Ascending aorta (tissue), 2 donors: ENCODE measurements at regions of chr6 and their contacts with region 1.

Region 1: GRCh38 chr6:3913077-3913957 is 64.1 kb downstream of the FAM50B start:
- DNase-seq: peak in 1 of 2 donors; percentile 91
- H3K4me3 ChIP-seq: no peak overlapping the region
- H3K27ac ChIP-seq: peak overlapping the region; percentile 88 to 92
- H3K4me1 ChIP-seq: peaks cover 24 to 44% of the 10 kb centered on the region in 2 donors
- H3K27me3 ChIP-seq: no peaks in the 10 kb centered on the region
- CTCF ChIP-seq: no peak

Region 2: GRCh38 chr6:3751730-3752542 is 161.4 kb before region 1 on chr6:
- intact Hi-C with region 1: loop called (anchors 2 kb)
- DNase-seq: peak; percentile 59 to 96
- H3K4me3 ChIP-seq: peak overlapping the region; percentile 81 to 82
- H3K27ac ChIP-seq: peak overlapping the region; percentile 100
- H3K4me1 ChIP-seq: peaks cover 0 to 3% of the 10 kb centered on the region in 2 donors
- H3K27me3 ChIP-seq: no peaks in the 10 kb centered on the region
- CTCF ChIP-seq: peak; percentile 33 to 50 (median 47)

Region 3: GRCh38 chr6:3808759-3809514 is 104.4 kb before region 1 on chr6:
- intact Hi-C with region 1: loop called (anchors 5 kb)
- DNase-seq: peak; percentile 54 to 93
- H3K4me3 ChIP-seq: peak overlapping the region in 1 of 2 donors; percentile 3
- H3K27ac ChIP-seq: peak overlapping the region; percentile 86 to 94
- H3K4me1 ChIP-seq: peaks cover 13 to 47% of the 10 kb centered on the region in 2 donors
- H3K27me3 ChIP-seq: no peaks in the 10 kb centered on the region
- CTCF ChIP-seq: no peak

Region 4: DNA sequence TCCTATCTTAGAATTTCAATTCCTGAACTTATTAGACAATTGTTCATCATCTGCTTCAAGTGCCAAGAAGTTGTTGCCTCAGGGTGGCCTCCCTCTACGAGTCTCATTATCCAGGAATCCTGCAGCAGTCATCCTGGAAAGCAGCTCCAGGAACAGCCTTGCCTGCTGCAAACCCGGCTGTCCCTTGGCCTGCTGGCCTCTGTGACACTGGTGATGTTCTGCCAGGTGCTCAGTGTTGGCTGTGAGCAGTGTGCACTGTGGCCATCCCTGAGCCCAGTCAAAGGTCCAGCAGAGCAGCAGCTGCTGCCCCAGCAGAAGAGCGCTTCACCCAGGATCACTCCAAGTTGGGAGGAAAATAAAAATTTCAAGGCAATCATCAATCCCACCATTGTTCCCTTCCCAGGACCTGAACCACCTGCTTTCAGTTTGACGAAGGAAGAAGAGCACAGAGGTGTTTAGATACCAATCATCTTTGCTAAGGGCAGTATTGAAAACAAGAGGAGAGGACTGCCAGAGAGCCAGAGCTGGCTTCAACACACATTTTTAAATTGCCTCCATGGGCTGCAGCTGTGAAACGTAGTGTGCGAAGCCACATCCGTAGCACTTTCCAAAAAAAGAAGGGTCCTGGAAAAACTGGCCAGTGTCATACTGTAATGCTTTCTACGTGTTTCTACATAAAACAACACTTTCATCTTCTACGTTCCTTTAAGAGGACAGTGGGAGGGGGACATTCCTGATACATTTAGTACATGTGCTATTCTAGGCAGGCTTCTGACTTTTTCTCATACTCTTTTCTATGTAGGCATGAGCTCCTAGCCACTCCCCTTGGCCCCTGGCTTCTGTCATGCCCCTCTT is 71.4 kb before region 1 on chr6:
- intact Hi-C with region 1: loop called (anchors 2 kb)
- DNase-seq: peak in 1 of 2 donors; percentile 79
- H3K4me3 ChIP-seq: no peak overlapping the region
- H3K27ac ChIP-seq: peak overlapping the region; percentile 85 to 91
- H3K4me1 ChIP-seq: peaks cover 7 to 40% of the 10 kb centered on the region in 2 donors
- H3K27me3 ChIP-seq: no peaks in the 10 kb centered on the region
- CTCF ChIP-seq: no peak

Region 5: DNA sequence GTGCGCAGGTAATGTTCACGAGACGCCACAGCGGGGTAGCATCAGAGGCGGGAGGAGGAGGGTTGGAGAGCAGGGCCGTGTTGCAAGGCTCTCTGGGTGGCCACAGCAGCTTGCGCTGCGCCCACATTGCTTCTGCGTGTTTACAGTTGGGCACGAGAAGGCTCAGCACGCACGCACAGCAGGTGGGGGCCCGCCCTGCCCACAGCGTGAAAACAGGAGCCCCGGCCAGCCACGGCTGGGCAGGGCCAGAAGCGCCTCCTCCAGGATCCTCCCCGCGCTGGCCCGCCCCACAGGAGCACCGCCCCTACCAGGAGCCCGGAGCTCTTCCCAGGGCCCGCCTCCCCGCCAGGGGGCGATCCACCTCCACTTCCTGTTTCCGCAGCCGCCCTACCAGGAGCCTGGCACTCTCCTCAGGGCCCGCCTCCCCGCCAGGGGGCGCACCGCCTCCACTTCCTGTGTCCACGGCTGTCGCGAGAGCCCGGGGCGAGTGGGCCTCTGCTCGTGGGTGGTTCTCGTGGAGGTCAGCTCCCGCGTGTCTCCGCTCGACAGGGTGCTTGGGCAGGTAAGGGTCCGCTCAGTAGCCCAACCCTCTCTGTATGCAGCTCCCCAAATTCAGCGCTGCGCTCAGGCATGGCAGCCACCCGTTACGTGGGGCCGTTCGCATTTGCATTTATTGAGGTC is 64.3 kb before region 1 on chr6 and contains the start of gene FAM50B:
- intact Hi-C with region 1: loop called (anchors 1 kb)
- DNase-seq: peak; percentile 79 to 96
- H3K4me3 ChIP-seq: peak within 1 kb of the TSS; percentile 46 to 64
- H3K27ac ChIP-seq: peak within 1 kb of the TSS; percentile 70 to 74
- H3K4me1 ChIP-seq: peaks cover 0 to 36% of the 10 kb centered on the region in 2 donors
- H3K27me3 ChIP-seq: no peaks in the 10 kb centered on the region
- CTCF ChIP-seq: peak; percentile 91 to 99 (median 98)
- total RNA-seq, gene FAM50B: 8.1 TPM

Region 6: DNA sequence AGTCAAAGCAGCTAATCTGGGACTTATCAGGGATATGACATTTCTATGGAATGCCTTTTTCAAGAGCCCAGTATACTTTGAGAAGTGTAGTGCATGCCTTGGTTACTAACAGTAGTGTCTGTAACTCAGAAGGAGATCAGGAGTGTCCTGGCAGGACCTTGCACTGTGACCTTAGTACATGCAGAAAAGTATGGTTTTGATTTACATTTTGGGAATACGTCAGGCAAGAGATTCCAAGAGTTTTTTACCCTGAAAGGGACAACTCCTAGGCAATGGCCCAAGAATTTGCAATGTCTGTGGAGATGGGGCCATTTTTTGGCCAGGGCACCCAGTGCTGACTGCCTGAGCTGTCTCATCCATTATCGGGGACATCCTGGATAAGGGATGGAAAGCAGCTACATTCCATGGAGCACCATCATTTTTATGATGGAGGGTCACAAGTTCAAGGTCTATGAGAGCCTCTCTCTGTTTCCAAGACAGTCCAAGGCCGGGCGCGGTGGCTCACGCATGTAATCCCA is 16.0 kb after region 1 on chr6:
- intact Hi-C with region 1: loop called (anchors 2 kb)
- DNase-seq: no peak
- H3K4me3 ChIP-seq: no peak overlapping the region
- H3K27ac ChIP-seq: peak overlapping the region; percentile 39 to 52
- H3K4me1 ChIP-seq: peaks cover 0 to 9% of the 10 kb centered on the region in 2 donors
- H3K27me3 ChIP-seq: no peaks in the 10 kb centered on the region
- CTCF ChIP-seq: no peak

Region 7: DNA sequence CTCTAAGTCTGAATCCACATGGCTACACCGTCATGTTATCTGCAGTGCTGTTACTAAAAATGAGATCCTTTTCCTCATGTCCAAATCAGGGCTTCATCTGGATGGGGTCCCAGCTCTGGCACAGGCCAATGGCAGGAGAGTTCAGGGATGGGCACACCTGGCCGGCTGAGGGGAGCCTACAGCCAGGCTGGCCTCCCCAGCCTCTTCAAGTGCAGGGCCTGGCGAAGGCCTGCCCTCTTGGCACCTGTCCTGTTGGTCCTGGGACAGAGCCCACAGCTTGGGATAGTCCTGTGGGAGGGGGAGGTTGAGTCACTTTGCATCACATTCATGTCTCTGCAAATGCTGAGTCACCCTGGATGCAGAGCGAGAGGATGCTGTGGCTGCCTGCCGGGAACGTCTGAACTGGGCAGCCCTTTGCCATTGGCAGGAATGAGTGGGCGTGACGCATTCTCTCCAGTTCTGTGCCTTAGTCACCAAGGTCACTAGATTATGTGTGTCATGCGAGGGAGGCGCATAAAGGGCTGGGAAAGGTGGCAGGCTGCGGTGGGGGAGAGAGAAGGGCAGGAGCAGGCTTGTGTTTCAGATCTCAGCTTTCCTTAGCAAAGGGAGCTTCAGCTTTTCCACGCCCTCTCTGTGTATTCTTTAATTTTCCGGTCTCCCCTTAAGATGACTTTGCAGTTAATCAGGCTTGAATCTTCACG is 445.2 kb after region 1 on chr6:
- intact Hi-C with region 1: loop called (anchors 10 kb)
- DNase-seq: peak; percentile 94 to 99
- H3K4me3 ChIP-seq: peak overlapping the region; percentile 35 to 39
- H3K27ac ChIP-seq: peak overlapping the region; percentile 96 to 98
- H3K4me1 ChIP-seq: peaks cover 5 to 10% of the 10 kb centered on the region in 2 donors
- H3K27me3 ChIP-seq: no peaks in the 10 kb centered on the region
- CTCF ChIP-seq: no peak